ENCODE measurements at regions of chr6 and their contacts with region 1.

Region 1: GRCh38 chr6:7276199-7276524 is 36.8 kb downstream of the SSR1 start:
- DNase-seq: no peak
- ATAC-seq: no peak
- H3K4me3 ChIP-seq: no peak overlapping the region
- H3K27ac ChIP-seq: no peak overlapping the region
- H3K4me1 ChIP-seq: peaks cover 11% of the 10 kb centered on the region
- H3K27me3 ChIP-seq: no peaks in the 10 kb centered on the region
- CTCF ChIP-seq: no peak
- EP300 ChIP-seq: no peak
- POLR2A ChIP-seq: no peak
- RAD21 ChIP-seq: no peak

Region 2: DNA sequence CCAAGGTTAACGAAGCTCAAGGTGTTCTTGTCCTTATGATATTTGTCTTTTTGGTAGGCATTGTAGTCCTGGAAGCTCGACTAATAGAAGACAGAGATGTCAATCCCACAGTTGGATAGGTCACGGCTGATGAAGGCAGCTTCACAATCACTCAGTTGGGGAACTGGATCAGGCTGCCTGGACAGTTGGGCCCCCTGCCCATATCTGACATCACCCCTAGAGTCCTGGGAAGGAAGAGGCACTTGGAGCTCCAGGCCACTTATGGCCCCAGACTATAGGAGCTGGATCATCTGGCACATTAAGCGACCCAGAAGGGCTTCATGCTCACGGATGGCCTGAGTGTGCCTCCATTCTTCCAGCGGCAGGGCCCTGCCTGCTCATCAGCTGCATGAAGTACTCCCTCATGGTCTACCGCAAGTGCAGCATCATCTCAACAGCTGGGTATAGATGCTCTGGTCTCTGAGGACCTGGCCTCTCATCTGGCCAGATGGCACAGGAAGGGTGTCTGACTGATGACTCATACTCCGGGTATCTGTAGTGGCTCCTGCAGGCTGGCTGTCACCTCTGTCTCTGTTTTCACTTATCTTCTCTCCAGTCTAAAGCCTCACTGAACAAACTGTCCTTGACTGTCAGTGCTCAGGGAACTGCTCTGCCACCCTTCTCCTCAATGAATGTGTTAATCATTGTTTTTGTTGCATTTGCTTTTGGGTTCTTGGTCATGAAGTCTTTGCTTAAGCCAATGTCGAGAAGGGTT is 66.0 kb after region 1 on chr6:
- CTCF ChIA-PET with region 1: interaction called, 25 read pairs
- POLR2A ChIA-PET with region 1: interaction called, 5 read pairs
- in situ Hi-C with region 1: no loop called
- intact Hi-C with region 1: loop called (anchors 1 kb)
- DNase-seq: peak; percentile 91
- ATAC-seq: peak; percentile 93
- H3K4me3 ChIP-seq: no peak overlapping the region
- H3K27ac ChIP-seq: no peak overlapping the region
- H3K4me1 ChIP-seq: peaks cover 37% of the 10 kb centered on the region
- H3K27me3 ChIP-seq: no peaks in the 10 kb centered on the region; a peak in 1 of 5 replicates
- CTCF ChIP-seq: no peak; the same call in 1 of the 2 replicates
- EP300 ChIP-seq: peak in 1 of 2 experiments; percentile 46; a peak in 1 of 4 replicates
- POLR2A ChIP-seq: no peak
- RAD21 ChIP-seq: no peak